CD4-positive, alpha-beta T cell (primary cell): ENCODE measurements at regions of chr6 and their contacts with region 1.

Region 1: DNA sequence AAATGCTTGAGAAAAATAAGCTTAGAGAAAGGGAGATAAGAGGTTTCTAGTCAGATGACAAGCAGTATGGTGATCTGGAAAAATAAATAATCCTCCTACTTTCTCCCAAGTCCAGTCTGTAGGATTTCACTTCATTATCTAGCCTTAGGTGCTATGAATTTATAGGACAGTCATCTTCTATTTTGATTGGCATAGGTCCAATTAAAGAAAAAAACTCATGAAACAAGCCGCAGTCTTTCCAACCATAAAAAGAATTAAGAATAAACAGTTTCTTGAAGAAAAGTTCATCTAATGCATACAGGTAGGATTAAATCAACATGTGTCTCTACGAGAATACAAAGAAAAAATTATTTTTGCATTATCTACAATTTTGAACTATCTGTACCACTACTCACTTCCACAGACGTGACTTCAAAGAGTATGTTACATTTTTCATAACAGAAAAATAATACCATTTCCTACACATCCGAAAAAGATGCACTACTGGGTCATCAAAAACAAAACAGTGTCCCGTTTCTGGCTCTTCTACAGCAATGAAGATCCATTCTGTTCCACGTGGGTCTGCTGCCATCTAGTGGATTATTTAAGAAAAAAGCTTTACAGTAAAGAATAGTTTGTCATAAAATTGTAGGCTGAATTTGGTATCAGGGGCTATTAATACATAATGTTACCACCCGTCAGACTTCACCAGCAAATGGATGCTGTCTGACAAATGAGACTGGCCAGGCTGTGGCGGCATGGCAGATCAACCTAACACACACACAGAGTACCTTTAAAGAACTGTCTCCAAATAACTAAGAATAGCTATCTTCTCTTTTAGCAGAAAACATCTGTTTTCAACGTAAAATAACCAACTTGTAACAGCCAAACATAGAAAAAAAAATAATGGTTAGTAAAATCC is 28.9 kb downstream of the STX7 start:
- DNase-seq: peak in 11 of 14 experiments; percentile 3 to 80 (median 20)
- ATAC-seq: peak; percentile 67
- H3K4me3 ChIP-seq: no peak overlapping the region
- H3K4me3 Mint-ChIP-seq: no peak overlapping the region
- H3K27ac ChIP-seq: no peak overlapping the region
- H3K27ac Mint-ChIP-seq: no peak overlapping the region
- H3K4me1 ChIP-seq: no peaks in the 10 kb centered on the region
- H3K4me1 Mint-ChIP-seq: peaks cover 26% of the 10 kb centered on the region
- H3K27me3 ChIP-seq: no peaks in the 10 kb centered on the region
- H3K27me3 Mint-ChIP-seq: no peaks in the 10 kb centered on the region
- CTCF ChIP-seq: peak; percentile 90

Region 2: GRCh38 chr6:131909408-131910218 is 574.4 kb before region 1 on chr6:
- CTCF ChIA-PET with region 1: no interaction called
- POLR2A ChIA-PET with region 1: no interaction called
- intact Hi-C with region 1: loop called (anchors 10 kb)
- DNase-seq: peak; percentile 41 to 79 (median 62)
- ATAC-seq: peak; percentile 96
- H3K4me3 ChIP-seq: no peak overlapping the region
- H3K4me3 Mint-ChIP-seq: peak overlapping the region; percentile 42
- H3K27ac ChIP-seq: no peak overlapping the region
- H3K27ac Mint-ChIP-seq: no peak overlapping the region
- H3K4me1 ChIP-seq: no peaks in the 10 kb centered on the region
- H3K4me1 Mint-ChIP-seq: peaks cover 8% of the 10 kb centered on the region
- H3K27me3 ChIP-seq: peaks cover 2 to 23% of the 10 kb centered on the region in 2 experiments
- H3K27me3 Mint-ChIP-seq: peaks cover 44% of the 10 kb centered on the region
- CTCF ChIP-seq: peak; percentile 98

Region 3: GRCh38 chr6:132300323-132300949 is 183.6 kb before region 1 on chr6:
- CTCF ChIA-PET with region 1: no interaction called
- POLR2A ChIA-PET with region 1: no interaction called
- intact Hi-C with region 1: loop called in 1 of 2 experiments (anchors 1 kb)
- DNase-seq: peak in 3 of 14 experiments; percentile 14 to 29 (median 25)
- ATAC-seq: no peak
- H3K4me3 ChIP-seq: no peak overlapping the region
- H3K4me3 Mint-ChIP-seq: no peak overlapping the region
- H3K27ac ChIP-seq: no peak overlapping the region
- H3K27ac Mint-ChIP-seq: no peak overlapping the region
- H3K4me1 ChIP-seq: no peaks in the 10 kb centered on the region
- H3K4me1 Mint-ChIP-seq: no peaks in the 10 kb centered on the region
- H3K27me3 ChIP-seq: peaks cover 0 to 11% of the 10 kb centered on the region in 2 experiments
- H3K27me3 Mint-ChIP-seq: peaks cover 31% of the 10 kb centered on the region
- CTCF ChIP-seq: no peak

Region 4: GRCh38 chr6:132461958-132462357 is 22.1 kb before region 1 on chr6:
- CTCF ChIA-PET with region 1: no interaction called
- POLR2A ChIA-PET with region 1: no interaction called
- intact Hi-C with region 1: no loop called
- DNase-seq: no peak
- ATAC-seq: no peak
- H3K4me3 ChIP-seq: no peak overlapping the region
- H3K4me3 Mint-ChIP-seq: no peak overlapping the region
- H3K27ac ChIP-seq: no peak overlapping the region
- H3K27ac Mint-ChIP-seq: no peak overlapping the region
- H3K4me1 ChIP-seq: no peaks in the 10 kb centered on the region
- H3K4me1 Mint-ChIP-seq: no peaks in the 10 kb centered on the region
- H3K27me3 ChIP-seq: no peaks in the 10 kb centered on the region
- H3K27me3 Mint-ChIP-seq: no peaks in the 10 kb centered on the region
- CTCF ChIP-seq: no peak

Region 5: DNA sequence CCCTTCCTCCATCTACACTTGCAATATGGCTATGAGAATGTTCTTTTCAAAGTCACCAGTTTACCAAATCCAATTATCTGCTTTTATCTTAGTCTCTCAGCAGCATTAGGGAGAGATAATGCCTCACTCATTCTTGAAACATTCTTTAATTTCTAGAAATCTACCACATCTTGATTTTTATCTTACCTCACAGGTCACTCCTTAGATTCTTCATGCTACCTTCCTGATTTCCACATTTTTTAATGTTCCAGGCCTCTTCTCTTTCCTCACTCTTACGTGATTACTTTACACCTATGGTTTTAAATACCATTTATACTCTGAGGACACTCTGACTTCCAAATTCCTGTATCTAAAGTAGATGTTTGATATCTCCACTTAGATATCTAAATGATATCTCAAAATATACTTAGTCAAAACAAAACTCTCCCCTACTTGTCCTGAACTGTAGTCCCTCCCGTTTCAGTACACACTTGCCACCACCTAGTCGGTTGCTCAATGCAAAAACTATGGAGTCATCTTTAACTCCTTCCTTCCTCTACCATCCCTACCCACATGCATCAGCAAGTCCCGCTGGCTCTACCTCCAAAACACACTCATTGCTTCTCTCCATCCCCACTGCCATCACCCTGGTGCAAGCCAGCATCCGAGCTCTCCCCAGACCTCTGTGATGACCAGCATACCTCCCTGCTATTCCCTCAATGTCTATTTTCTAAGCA is 15.6 kb after region 1 on chr6:
- CTCF ChIA-PET with region 1: interaction called, 10 read pairs
- POLR2A ChIA-PET with region 1: no interaction called
- intact Hi-C with region 1: no loop called
- DNase-seq: no peak
- ATAC-seq: no peak
- H3K4me3 ChIP-seq: no peak overlapping the region
- H3K4me3 Mint-ChIP-seq: no peak overlapping the region
- H3K27ac ChIP-seq: no peak overlapping the region
- H3K27ac Mint-ChIP-seq: no peak overlapping the region
- H3K4me1 ChIP-seq: no peaks in the 10 kb centered on the region
- H3K4me1 Mint-ChIP-seq: peaks cover 55% of the 10 kb centered on the region
- H3K27me3 ChIP-seq: no peaks in the 10 kb centered on the region
- H3K27me3 Mint-ChIP-seq: no peaks in the 10 kb centered on the region
- CTCF ChIP-seq: no peak